ENCODE measurements at regions of chr6 and their contacts with region 1.

Region 1: DNA sequence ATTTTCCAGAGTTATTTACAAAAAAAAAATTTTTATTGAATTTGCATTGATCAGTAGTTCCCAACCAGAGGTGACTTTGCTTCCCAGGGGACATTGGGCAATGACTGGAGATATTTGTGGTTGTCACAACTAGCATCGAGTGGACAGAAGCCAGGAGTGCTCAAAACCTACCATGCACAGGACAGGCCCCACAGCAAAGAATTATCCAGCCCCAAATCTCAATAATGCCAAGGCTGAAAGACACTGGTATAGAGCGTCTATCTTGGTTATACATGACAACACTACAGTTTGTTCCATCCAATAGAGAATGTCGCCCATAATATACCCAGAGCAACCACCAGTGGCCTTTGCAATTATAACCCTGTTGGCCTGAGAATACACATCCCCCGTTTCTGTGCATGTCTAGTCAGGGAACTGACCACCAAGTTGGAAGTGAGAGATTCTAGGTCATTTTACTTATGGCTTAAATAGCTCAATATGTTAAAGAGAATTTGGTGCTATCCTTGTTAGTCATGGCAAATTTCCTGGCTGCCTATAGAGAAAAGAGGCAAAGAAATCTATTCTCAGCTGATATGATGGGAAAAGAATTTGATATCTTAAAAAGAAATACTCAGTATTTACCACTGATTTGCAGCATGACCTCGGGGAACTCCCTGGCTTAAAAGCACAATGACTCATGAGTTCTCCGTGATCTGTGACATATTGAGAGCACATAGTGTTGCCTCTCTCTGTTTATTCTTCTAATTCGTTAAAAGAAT is 76.0 kb upstream of the ADTRP start:
- DNase-seq: peak; percentile 66
- ATAC-seq: peak; percentile 91
- H3K4me3 ChIP-seq: no peak overlapping the region
- H3K27ac ChIP-seq: 0 out of 2 replicates have a peak overlapping the region, but pooled peaks have one; percentile 7
- H3K4me1 ChIP-seq: peaks cover 9% of the 10 kb centered on the region; the same call in 1 of the 2 replicates
- H3K27me3 ChIP-seq: no peaks in the 10 kb centered on the region
- CTCF ChIP-seq: no peak

Region 2: DNA sequence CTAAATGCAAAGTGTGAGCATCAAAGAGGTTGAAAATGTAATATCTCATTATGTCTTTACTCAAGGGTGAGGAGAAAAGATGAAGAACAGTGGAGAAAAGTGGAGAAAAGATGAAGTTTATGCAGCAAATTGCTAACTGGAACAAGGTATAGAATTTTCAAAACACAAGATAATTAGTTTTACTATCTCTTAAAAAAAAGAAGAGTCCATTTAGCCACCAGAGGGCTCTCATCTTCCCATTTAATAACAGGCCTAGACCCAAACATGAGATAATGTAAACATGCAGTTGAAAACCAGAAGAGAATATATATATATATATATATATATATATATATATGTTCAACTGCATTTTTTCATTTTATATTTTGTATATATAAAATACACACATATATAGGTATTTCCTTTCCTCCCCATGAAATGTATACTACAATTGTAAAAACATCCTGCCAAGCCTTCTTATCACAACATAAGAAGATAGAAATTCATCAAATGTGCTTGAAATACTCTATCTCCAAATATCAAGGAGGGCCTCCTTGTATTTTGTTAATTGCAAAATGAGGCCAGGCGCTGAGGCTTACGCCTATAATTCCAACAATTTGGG is 154.4 kb before region 1 on chr6:
- CTCF ChIA-PET with region 1: no interaction called
- POLR2A ChIA-PET with region 1: no interaction called
- intact Hi-C with region 1: loop called (anchors 10 kb)
- DNase-seq: peak; percentile 74
- ATAC-seq: no peak
- H3K4me3 ChIP-seq: no peak overlapping the region
- H3K27ac ChIP-seq: no peak overlapping the region
- H3K4me1 ChIP-seq: peaks cover 15% of the 10 kb centered on the region
- H3K27me3 ChIP-seq: no peaks in the 10 kb centered on the region
- CTCF ChIP-seq: peak; percentile 59

Region 3: GRCh38 chr6:11732036-11732631 is 122.5 kb before region 1 on chr6:
- CTCF ChIA-PET with region 1: no interaction called
- POLR2A ChIA-PET with region 1: no interaction called
- intact Hi-C with region 1: no loop called
- DNase-seq: no peak
- ATAC-seq: no peak
- H3K4me3 ChIP-seq: no peak overlapping the region
- H3K27ac ChIP-seq: no peak overlapping the region
- H3K4me1 ChIP-seq: peaks cover 11% of the 10 kb centered on the region; the same call in 1 of the 2 replicates
- H3K27me3 ChIP-seq: no peaks in the 10 kb centered on the region
- CTCF ChIP-seq: no peak

Region 4: DNA sequence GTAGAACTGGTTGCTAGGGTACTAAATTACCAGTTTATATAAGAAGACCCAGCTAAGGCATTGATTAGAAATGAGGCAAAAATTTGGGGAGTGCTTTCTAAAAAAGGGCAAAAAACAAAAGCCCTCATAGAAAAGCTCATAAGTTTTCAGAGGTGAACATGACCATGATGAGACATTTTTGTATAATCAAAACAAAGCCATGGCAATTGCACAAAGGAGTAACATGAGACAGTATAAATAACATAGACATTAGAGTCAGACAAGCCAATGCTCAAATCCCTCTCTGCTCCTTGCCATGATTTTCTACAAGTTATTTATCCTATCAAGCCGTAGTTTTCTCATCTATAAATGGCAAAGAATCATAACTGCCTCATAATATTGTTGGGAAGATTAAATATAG is 36.3 kb after region 1 on chr6:
- CTCF ChIA-PET with region 1: no interaction called
- POLR2A ChIA-PET with region 1: no interaction called
- intact Hi-C with region 1: no loop called
- DNase-seq: peak; percentile 22
- ATAC-seq: no peak
- H3K4me3 ChIP-seq: no peak overlapping the region
- H3K27ac ChIP-seq: no peak overlapping the region
- H3K4me1 ChIP-seq: peaks cover 12% of the 10 kb centered on the region
- H3K27me3 ChIP-seq: no peaks in the 10 kb centered on the region
- CTCF ChIP-seq: no peak